Activated T-helper 1 cell treated with anti-CD3 and anti-CD28 coated beads, Interleukin-12 subunit alpha, Interleukin-12 subunit beta, Interleukin-2, Interleukin-4 antibody, amounts not matched to agents 30 ng/mL and 10 ng/mL and 1 ng/mL, durations not matched to agents 14 hours and 24 hours and 36 hours (primary cell): ENCODE measurements at regions of chrX and their contacts with region 1.

Region 1: DNA sequence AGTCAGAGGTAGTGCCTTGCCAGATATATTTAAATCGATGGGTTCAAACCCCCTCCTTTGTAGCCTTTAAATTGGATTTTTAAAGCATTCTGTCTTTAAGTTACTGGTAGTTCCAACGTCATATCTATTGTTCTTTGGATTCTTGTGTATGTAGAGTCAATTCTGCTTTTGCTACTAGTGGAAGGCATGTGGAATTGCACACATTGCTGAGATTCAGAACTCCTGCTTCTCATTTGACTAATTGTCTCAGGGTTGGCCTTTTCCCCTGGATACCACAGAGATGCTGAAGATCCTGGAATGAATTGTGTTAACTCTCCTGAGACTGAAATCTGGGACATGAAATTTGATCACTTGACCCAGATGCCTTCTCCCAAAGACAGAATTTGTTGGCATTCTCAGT is 328.3 kb upstream of the RPS6KA3 start:
- DNase-seq: no peak
- H3K4me3 Mint-ChIP-seq: no peak overlapping the region
- H3K27ac Mint-ChIP-seq: no peak overlapping the region
- H3K4me1 Mint-ChIP-seq: peaks cover 25% of the 10 kb centered on the region
- H3K27me3 Mint-ChIP-seq: peaks cover 2% of the 10 kb centered on the region

Region 2: DNA sequence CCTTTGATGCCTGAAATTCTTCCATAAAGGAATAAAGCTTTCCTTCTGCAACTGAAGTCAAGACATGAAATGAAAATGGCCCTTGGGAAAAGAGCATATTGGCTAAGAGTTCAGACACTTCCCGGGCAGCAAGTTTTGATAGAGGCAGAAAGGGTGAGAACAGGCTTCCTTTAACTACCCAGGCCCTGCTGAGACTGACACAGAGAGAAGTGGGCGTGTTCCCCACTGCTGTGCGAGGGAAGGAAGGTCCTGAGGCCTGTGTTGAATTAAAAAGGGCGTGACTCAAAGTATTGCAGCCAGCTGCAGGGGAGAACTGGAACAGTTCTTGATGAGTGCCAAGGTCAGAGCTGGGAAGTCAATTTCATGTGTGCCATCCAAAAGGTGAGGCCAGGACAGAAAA is 1438.8 kb before region 1 on chrX:
- intact Hi-C with region 1: no loop called
- DNase-seq: no peak
- H3K4me3 Mint-ChIP-seq: no peak overlapping the region
- H3K27ac Mint-ChIP-seq: no peak overlapping the region
- H3K4me1 Mint-ChIP-seq: no peaks in the 10 kb centered on the region
- H3K27me3 Mint-ChIP-seq: no peaks in the 10 kb centered on the region

Region 3: GRCh38 chrX:20141281-20142220 is 453.4 kb before region 1 on chrX and contains the start of gene EIF1AX:
- intact Hi-C with region 1: loop called (anchors 5 kb)
- DNase-seq: peak; percentile 93
- H3K4me3 Mint-ChIP-seq: peak within 1 kb of the TSS; percentile 90
- H3K27ac Mint-ChIP-seq: peak within 1 kb of the TSS; percentile 84
- H3K4me1 Mint-ChIP-seq: peaks cover 29% of the 10 kb centered on the region
- H3K27me3 Mint-ChIP-seq: no peaks in the 10 kb centered on the region
- total RNA-seq, gene EIF1AX: 107 TPM in 2 replicates

Region 4: GRCh38 chrX:20461576-20461975 is 133.4 kb before region 1 on chrX:
- intact Hi-C with region 1: loop called (anchors 5 kb)
- DNase-seq: no peak
- H3K4me3 Mint-ChIP-seq: no peak overlapping the region
- H3K27ac Mint-ChIP-seq: no peak overlapping the region
- H3K4me1 Mint-ChIP-seq: peaks cover 43% of the 10 kb centered on the region
- H3K27me3 Mint-ChIP-seq: peaks cover under 1% of the 10 kb centered on the region

Region 5: GRCh38 chrX:20547611-20548051 is 47.4 kb before region 1 on chrX:
- intact Hi-C with region 1: loop called (anchors 5 kb)
- DNase-seq: no peak
- H3K4me3 Mint-ChIP-seq: no peak overlapping the region
- H3K27ac Mint-ChIP-seq: no peak overlapping the region
- H3K4me1 Mint-ChIP-seq: peaks cover 6% of the 10 kb centered on the region
- H3K27me3 Mint-ChIP-seq: peaks cover 3% of the 10 kb centered on the region

Region 6: DNA sequence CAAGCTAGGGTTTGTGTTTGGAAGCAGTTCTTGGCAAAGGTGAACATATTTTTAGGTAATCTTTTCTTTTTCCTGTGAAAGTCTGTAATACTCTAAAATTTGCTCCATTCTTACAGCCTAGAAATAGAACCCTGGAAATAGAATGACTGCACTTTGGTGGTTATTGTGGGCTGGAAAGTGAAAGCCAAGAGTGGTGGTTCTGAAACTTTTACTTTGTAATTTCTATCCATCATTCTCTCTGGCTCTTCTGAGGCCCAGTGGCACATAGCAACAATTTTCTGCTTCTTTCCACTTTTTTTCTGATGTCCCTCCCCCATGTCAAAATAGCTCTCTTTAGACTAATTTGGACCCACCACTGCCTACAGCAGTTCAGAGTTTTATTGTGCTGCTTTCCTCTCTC is 27.9 kb before region 1 on chrX:
- intact Hi-C with region 1: loop called (anchors 1 kb)
- DNase-seq: no peak
- H3K4me3 Mint-ChIP-seq: no peak overlapping the region
- H3K27ac Mint-ChIP-seq: no peak overlapping the region
- H3K4me1 Mint-ChIP-seq: no peaks in the 10 kb centered on the region
- H3K27me3 Mint-ChIP-seq: peaks cover 10% of the 10 kb centered on the region

Region 7: GRCh38 chrX:20743046-20743445 is 148.1 kb after region 1 on chrX:
- intact Hi-C with region 1: no loop called
- DNase-seq: no peak
- H3K4me3 Mint-ChIP-seq: no peak overlapping the region
- H3K27ac Mint-ChIP-seq: no peak overlapping the region
- H3K4me1 Mint-ChIP-seq: no peaks in the 10 kb centered on the region
- H3K27me3 Mint-ChIP-seq: no peaks in the 10 kb centered on the region

Region 8: DNA sequence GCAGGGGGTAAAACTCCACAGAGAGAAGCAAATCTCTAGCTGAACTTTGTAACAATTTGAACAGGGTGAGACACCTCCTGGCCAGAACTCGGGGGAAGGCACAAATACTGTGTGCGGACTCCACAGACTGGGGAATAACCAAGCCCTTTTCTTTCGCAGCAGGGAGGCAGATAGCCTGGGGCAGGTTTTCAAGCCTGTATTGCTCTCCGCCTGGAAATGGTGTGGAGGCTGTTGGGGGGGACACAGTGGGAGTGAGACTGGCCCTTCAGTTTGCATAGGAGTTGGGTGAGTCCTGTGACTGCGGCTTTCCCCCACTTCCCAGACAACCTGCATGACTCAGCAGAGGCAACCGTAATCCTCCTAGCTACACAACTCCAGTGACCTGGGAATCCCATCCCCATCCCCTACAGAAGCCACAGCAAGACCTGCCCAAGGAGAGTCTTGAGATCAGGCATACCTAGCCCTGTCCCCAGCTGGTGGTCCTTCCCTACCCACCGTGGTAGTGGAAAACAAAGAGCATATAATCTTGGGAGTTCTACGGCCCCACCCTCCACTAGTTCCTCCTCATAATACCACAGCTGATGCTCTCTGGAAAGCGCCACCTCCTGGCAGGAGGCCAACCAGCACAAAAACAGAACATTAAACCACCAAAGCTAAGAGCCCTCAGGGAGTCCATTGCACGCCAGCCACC is 1175.8 kb after region 1 on chrX:
- intact Hi-C with region 1: loop called (anchors 10 kb)
- DNase-seq: no peak
- H3K4me3 Mint-ChIP-seq: no peak overlapping the region
- H3K27ac Mint-ChIP-seq: no peak overlapping the region
- H3K4me1 Mint-ChIP-seq: peaks cover 32% of the 10 kb centered on the region
- H3K27me3 Mint-ChIP-seq: no peaks in the 10 kb centered on the region